B cell (primary cell): ENCODE measurements at regions of chr15 and their contacts with region 1.

Region 1: GRCh38 chr15:99605490-99605931 is 39.7 kb downstream of the MEF2A start:
- DNase-seq: no peak
- ATAC-seq: no peak
- H3K4me3 ChIP-seq: no peak overlapping the region
- H3K4me3 Mint-ChIP-seq: peak overlapping the region; percentile 51
- H3K27ac ChIP-seq: peak overlapping the region in 1 of 2 donors; percentile 44
- H3K27ac Mint-ChIP-seq: peak overlapping the region; percentile 73
- H3K4me1 ChIP-seq: peaks cover 17 to 45% of the 10 kb centered on the region in 2 donors
- H3K4me1 Mint-ChIP-seq: peaks cover 73% of the 10 kb centered on the region
- H3K27me3 ChIP-seq: no peaks in the 10 kb centered on the region
- H3K27me3 Mint-ChIP-seq: no peaks in the 10 kb centered on the region
- CTCF ChIP-seq: no peak

Region 2: DNA sequence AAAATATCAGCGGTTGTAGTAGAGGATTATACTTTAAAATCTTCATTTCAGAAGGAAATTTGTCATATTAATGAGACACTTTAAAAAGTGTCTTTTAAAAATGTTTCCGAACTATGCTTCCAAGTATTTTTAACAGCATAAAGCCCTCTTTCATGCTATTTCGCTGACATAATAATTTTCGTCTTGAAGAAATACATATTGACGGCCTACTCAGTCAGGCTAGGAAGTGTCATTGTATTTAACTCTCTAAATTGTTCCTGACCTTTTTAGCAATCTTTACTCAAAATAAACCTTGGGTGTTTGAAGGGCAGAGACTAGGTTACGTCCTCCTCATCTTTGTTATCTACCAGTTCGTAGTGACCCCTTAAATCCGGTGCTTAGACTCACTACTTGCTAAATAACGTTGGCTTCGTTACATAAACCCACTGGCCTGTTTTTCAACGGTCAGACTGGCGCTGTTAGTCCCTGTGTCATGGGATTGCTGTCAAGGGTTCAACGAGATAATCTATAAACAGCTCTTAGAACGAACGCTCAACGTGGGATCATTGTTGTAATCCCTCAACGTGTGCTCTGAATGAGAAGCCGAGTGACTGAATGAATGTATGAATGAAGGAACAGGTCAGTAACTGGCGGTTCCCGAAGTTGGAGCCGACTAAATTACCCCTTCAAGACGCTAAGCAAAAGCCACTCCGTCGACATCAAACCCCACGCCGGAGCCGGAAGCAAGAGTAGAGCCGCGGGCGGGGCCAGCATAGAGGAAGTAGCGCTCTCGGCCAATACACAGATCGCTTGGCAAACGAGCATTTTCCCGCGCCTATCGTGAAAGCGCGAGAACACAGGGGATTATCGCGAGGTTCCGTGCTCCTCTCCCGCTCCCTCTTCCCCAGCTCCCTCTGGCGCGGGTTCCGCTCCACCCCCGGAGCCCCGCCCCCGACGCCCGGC is 354.7 kb before region 1 on chr15:
- CTCF ChIA-PET with region 1: no interaction called
- POLR2A ChIA-PET with region 1: interaction called, 10 read pairs
- intact Hi-C with region 1: no loop called
- DNase-seq: peak; percentile 97
- ATAC-seq: peak; percentile 97
- H3K4me3 ChIP-seq: peak overlapping the region; percentile 61 to 91 (median 81)
- H3K4me3 Mint-ChIP-seq: peak overlapping the region; percentile 96
- H3K27ac ChIP-seq: peak overlapping the region; percentile 70 to 81
- H3K27ac Mint-ChIP-seq: peak overlapping the region; percentile 92
- H3K4me1 ChIP-seq: peaks cover 18 to 30% of the 10 kb centered on the region in 2 donors
- H3K4me1 Mint-ChIP-seq: peaks cover 31% of the 10 kb centered on the region
- H3K27me3 ChIP-seq: no peaks in the 10 kb centered on the region
- H3K27me3 Mint-ChIP-seq: no peaks in the 10 kb centered on the region
- CTCF ChIP-seq: no peak

Region 3: GRCh38 chr15:99592145-99592791 is 13.2 kb before region 1 on chr15:
- CTCF ChIA-PET with region 1: no interaction called
- POLR2A ChIA-PET with region 1: no interaction called
- intact Hi-C with region 1: loop called (anchors 2 kb)
- DNase-seq: no peak
- ATAC-seq: no peak
- H3K4me3 ChIP-seq: no peak overlapping the region
- H3K4me3 Mint-ChIP-seq: no peak overlapping the region
- H3K27ac ChIP-seq: no peak overlapping the region
- H3K27ac Mint-ChIP-seq: no peak overlapping the region
- H3K4me1 ChIP-seq: peaks cover 12 to 32% of the 10 kb centered on the region in 2 donors
- H3K4me1 Mint-ChIP-seq: peaks cover 60% of the 10 kb centered on the region
- H3K27me3 ChIP-seq: no peaks in the 10 kb centered on the region
- H3K27me3 Mint-ChIP-seq: no peaks in the 10 kb centered on the region
- CTCF ChIP-seq: no peak